Dorsolateral prefrontal cortex (tissue), 120 donors: ENCODE measurements at regions of chr10 and their contacts with region 1.

Region 1: GRCh38 chr10:24814568-24815313 is 91.1 kb upstream of the ARHGAP21 start:
- DNase-seq: no peak
- H3K4me3 ChIP-seq: no peak overlapping the region
- H3K27ac ChIP-seq: peak overlapping the region in 20 of 59 donors; percentile 6 to 100 (median 96)
- H3K27me3 ChIP-seq: no peaks in the 10 kb centered on the region
- CTCF ChIP-seq: no peak

Region 2: GRCh38 chr10:24642622-24643417 is 171.9 kb before region 1 on chr10:
- intact Hi-C with region 1: loop called in 1 of 2 experiments (anchors 10 kb)
- DNase-seq: no peak
- H3K4me3 ChIP-seq: no peak overlapping the region
- H3K27ac ChIP-seq: peak overlapping the region in 26 of 59 donors; percentile 1 to 65 (median 24)
- H3K27me3 ChIP-seq: no peaks in the 10 kb centered on the region
- CTCF ChIP-seq: peak; percentile 49 to 88 (median 75)

Region 3: DNA sequence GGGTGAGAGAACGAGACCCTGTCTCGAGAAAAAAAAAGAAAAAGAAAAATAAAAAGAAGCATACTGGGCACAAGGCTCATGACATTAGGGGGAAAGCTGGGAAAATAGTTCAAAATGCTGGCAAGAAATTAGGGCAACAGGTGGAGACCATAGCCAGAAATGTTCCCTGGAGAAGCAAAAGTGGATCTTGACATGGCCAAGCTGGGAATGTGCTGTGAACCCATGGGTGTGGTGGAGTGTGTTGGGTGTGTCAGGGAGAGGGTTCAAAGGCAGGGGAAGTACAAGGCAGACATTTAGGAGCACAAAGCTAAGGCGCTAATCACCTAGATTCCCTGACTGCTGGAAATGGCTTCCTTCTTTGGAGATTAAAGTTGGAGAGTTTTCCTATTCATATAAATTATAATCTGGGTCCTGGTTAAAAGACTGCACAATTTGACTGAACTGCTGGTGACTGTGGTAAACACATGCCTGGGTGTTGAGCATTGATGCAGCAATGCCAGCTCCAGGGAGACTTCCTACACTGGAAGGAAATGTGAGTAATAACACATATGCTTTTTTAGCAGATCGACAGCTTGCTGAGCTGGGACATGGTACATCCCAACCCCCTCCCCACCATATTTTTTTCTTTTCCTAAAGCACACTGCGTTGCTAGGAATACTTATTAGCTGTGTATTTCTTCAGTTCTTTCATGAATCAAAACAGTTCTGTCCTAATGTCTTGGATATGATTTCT is 20.9 kb before region 1 on chr10:
- intact Hi-C with region 1: loop called in 1 of 2 experiments (anchors 2 kb)
- DNase-seq: peak in 2 of 10 donors; percentile 49 to 52
- H3K4me3 ChIP-seq: no peak overlapping the region
- H3K27ac ChIP-seq: peak overlapping the region in 53 of 59 donors; percentile 1 to 100 (median 72)
- H3K27me3 ChIP-seq: no peaks in the 10 kb centered on the region
- CTCF ChIP-seq: no peak

Region 4: DNA sequence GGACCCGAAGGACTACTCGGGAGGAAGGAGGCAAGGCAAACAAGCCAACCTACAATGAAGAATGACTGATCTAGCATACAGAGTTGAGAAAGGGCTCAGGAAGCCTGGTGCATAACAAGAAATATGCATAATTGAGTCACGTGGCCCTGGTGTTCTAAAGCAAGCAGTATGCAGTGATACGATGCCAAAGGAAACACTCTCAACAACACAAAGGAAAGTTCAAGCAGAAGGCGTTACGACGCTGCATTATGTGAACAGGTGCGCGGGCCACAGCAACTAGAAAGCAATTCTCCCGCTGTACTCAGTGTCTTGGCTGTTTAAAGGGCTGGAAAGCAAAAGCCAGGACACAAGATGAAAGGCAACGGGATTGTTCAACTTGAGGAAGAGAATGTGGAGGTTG is 36.9 kb after region 1 on chr10:
- intact Hi-C with region 1: loop called in 1 of 2 experiments (anchors 5 kb)
- DNase-seq: peak in 1 of 10 donors; percentile 36
- H3K4me3 ChIP-seq: peak overlapping the region in 24 of 59 donors; percentile 2 to 39 (median 20)
- H3K27ac ChIP-seq: peak overlapping the region in 57 of 59 donors; percentile 16 to 96 (median 87)
- H3K27me3 ChIP-seq: no peaks in the 10 kb centered on the region
- CTCF ChIP-seq: no peak